A549 (cell line): ENCODE measurements at regions of chr19 and their contacts with region 1.

Region 1: DNA sequence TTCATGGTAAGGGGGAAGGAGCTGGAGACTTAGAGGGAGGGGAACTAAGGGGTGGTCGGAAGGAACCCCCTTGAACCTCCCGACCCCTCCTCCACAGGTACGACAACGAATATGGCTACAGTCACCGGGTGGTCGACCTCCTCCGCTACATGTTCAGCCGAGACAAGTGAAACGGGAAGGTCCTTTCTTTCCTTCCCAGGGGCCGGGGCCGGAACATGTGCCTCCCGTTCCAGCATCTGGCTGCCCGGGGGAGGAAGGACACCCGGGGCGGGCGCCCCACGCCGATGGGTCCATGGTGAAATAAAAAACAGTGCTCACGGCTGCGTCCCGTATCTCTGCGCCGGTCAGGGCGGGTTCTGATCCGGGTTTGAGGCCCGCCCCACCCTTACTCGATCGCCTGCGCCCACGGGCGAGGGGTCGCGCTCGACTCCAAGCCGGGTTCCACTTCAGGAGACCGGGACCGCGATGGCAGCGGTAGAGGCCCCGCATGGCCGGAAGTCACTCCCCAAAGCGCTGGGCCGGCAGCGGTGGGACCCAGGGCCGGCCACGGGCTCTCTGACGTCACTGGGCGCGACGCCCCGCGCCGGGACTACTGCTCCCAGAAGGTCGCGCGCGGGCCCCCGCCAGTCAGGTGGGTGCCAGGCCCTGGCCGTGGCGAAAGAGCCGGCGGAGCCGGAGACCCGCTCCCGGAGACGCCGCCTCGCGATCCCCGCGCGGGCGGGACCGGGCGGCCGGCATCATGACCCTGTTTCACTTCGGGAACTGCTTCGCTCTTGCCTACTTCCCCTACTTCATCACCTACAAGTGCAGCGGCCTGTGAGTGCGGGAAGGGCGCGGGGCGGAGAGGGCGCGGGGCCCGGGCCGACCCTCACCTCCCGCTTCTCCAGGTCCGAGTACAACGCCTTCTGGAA is at the start of gene TMEM147:
- DNase-seq: peak; percentile 95 to 100
- ATAC-seq: peak; percentile 88 to 95
- H3K4me3 ChIP-seq: peak within 1 kb of the TSS; percentile 86
- H3K27ac ChIP-seq: peak within 1 kb of the TSS; percentile 88 to 93
- H3K4me1 ChIP-seq: peaks cover 14% of the 10 kb centered on the region
- CTCF ChIP-seq: no peak
- EP300 ChIP-seq: no peak
- POLR2A ChIP-seq: peak; percentile 95
- RAD21 ChIP-seq: no peak
- polyA plus RNA-seq, gene TMEM147: 335 and 446 TPM in 2 replicates

Region 2: DNA sequence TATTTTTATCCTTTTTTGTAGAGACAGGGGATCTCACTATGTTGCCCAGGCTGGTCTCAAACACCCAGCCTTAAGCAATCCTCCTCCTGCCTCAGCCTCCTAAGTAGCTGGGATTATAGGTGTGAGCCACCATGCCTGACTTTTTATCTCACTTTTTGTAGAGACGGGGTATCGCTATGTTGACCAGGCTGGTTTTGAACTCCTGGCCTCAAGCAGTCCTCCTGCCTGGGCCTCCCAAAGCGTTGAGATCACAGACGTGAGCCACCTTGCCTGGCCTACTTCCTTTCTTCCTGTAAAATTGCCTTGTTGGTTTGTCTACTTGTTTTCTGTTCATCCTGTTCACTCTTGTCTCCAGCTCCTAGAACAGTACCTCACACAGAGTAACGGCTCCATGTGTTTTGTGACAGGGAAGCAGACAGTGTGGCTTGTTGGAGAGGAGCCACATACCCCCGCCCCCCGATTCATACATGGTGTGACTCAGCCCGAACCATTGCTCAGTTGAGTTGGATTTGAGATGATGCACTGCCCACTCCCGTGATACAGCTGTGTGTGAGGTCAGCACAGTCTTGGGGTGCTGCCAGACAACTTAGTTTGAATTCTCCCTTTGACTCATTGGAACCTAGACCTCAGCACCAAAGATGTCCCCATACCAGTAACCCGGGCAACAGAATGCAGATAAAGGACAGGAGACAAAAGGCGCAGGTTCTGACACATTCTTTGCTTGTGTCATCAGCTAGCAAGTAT is 140.2 kb before region 1 on chr19:
- CTCF ChIA-PET with region 1: no interaction called
- POLR2A ChIA-PET with region 1: no interaction called
- DNase-seq: peak; percentile 66
- ATAC-seq: peak; percentile 62 to 80
- H3K4me3 ChIP-seq: no peak overlapping the region
- H3K27ac ChIP-seq: no peak overlapping the region
- H3K4me1 ChIP-seq: no peaks in the 10 kb centered on the region
- CTCF ChIP-seq: no peak
- EP300 ChIP-seq: no peak
- POLR2A ChIP-seq: no peak
- RAD21 ChIP-seq: no peak

Region 3: GRCh38 chr19:35518313-35518712 is 26.9 kb before region 1 on chr19:
- CTCF ChIA-PET with region 1: interaction called, 43 read pairs
- POLR2A ChIA-PET with region 1: interaction called, 4 read pairs
- DNase-seq: peak; percentile 62 to 72
- ATAC-seq: peak; percentile 68 to 69
- H3K4me3 ChIP-seq: no peak overlapping the region
- H3K27ac ChIP-seq: peak overlapping the region; percentile 46 to 47; a peak in 4 of 6 replicates
- H3K4me1 ChIP-seq: peaks cover 23% of the 10 kb centered on the region
- CTCF ChIP-seq: no peak
- EP300 ChIP-seq: no peak
- POLR2A ChIP-seq: no peak
- RAD21 ChIP-seq: no peak

Region 4: GRCh38 chr19:35569281-35569781 is 24.1 kb after region 1 on chr19:
- CTCF ChIA-PET with region 1: interaction called, 37 read pairs
- POLR2A ChIA-PET with region 1: no interaction called
- DNase-seq: no peak
- ATAC-seq: no peak
- H3K4me3 ChIP-seq: no peak overlapping the region
- H3K27ac ChIP-seq: no peak overlapping the region
- H3K4me1 ChIP-seq: no peaks in the 10 kb centered on the region
- CTCF ChIP-seq: no peak
- EP300 ChIP-seq: no peak
- POLR2A ChIP-seq: no peak
- RAD21 ChIP-seq: no peak

Region 5: GRCh38 chr19:35612559-35613321 is 67.5 kb after region 1 on chr19 and contains the start of gene HAUS5:
- CTCF ChIA-PET with region 1: interaction called, 55 read pairs
- POLR2A ChIA-PET with region 1: no interaction called
- DNase-seq: peak; percentile 98 to 99
- ATAC-seq: peak; percentile 92 to 96
- H3K4me3 ChIP-seq: peak within 1 kb of the TSS; percentile 75
- H3K27ac ChIP-seq: peak within 1 kb of the TSS; percentile 72 to 87
- H3K4me1 ChIP-seq: peaks cover 9% of the 10 kb centered on the region; the same call in 2 of the 3 replicates
- CTCF ChIP-seq: no peak; the same call in 2 of the 3 replicates
- EP300 ChIP-seq: no peak
- POLR2A ChIP-seq: peak; percentile 84
- RAD21 ChIP-seq: no peak; a peak in 1 of 5 replicates
- polyA plus RNA-seq, gene HAUS5: 7.2 and 7.3 TPM in 2 replicates

Region 6: DNA sequence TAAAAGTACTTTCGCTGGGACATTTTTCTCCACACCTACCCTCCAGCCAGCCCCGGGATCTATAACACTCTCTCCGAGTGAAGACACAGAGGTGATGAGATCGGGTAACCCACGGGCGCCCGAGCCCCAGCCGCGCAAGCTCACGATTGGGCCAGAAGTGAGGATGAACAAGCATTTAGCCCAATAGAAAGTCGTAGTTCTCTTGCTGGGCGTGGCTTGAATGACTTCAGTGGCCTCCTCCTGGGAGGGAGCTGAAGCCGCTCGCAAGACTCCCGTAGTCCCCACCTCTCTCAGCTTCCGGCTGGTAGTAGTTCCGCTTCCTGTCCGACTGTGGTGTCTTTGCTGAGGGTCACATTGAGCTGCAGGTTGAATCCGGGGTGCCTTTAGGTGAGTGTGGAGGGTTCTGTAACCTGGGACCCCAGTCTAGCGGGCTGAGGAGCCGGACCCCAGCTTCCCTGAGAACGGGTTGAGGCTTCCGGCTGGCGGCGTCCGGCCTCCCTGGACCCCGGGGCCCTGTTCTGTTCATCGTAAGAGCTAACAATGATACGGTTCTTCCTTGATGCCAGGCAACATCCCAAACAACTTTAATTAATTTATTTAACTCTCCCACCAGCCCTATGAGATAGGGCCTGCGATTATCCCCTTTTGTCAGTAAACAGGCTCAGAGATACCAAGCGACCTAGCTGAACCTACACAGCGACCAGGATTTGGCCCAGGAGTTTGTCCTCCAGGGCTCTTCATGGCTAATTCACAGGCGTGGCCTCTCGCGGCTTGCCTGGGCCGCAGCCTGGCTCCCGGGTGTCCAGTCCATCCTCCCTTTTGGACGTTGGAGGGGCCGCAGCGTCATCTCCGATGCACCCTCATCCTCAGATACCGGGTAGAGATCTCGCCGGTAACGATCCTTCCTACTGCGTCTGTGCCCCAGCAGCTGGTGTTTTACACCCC is 103.0 kb after region 1 on chr19 and contains the start of gene COX6B1:
- CTCF ChIA-PET with region 1: interaction called, 28 read pairs
- POLR2A ChIA-PET with region 1: interaction called, 5 read pairs
- DNase-seq: peak; percentile 99 to 100
- ATAC-seq: peak; percentile 62 to 76
- H3K4me3 ChIP-seq: peak within 1 kb of the TSS; percentile 67
- H3K27ac ChIP-seq: peak within 1 kb of the TSS; percentile 81 to 84
- H3K4me1 ChIP-seq: peaks cover 18% of the 10 kb centered on the region
- CTCF ChIP-seq: no peak
- EP300 ChIP-seq: no peak
- POLR2A ChIP-seq: peak; percentile 96
- RAD21 ChIP-seq: no peak
- polyA plus RNA-seq, gene COX6B1: 749 and 1,115 TPM in 2 replicates

Region 7: GRCh38 chr19:35716801-35717666 is 171.8 kb after region 1 on chr19:
- CTCF ChIA-PET with region 1: interaction called, 53 read pairs
- POLR2A ChIA-PET with region 1: no interaction called
- DNase-seq: peak; percentile 95 to 99
- ATAC-seq: peak; percentile 74 to 91
- H3K4me3 ChIP-seq: peak overlapping the region; percentile 87
- H3K27ac ChIP-seq: peak overlapping the region; percentile 91 to 98
- H3K4me1 ChIP-seq: peaks cover 20% of the 10 kb centered on the region
- CTCF ChIP-seq: peak; percentile 100
- EP300 ChIP-seq: no peak
- POLR2A ChIP-seq: peak; percentile 74
- RAD21 ChIP-seq: peak; percentile 89 to 99